Activated CD8-positive, alpha-beta T cell treated with anti-CD3 and anti-CD28 coated beads, Interleukin-2, amount 10 ng/mL, durations not matched to agents 7 days and 5 days (primary cell): ENCODE measurements at regions of chr4 and their contacts with region 1.

Region 1: GRCh38 chr4:119212234-119212963 is at the start of gene USP53:
- DNase-seq: peak; percentile 98
- ATAC-seq: peak; percentile 96
- H3K4me3 Mint-ChIP-seq: peak within 1 kb of the TSS; percentile 97
- H3K27ac Mint-ChIP-seq: peak within 1 kb of the TSS; percentile 88
- H3K4me1 Mint-ChIP-seq: peaks cover 36% of the 10 kb centered on the region
- H3K27me3 Mint-ChIP-seq: no peaks in the 10 kb centered on the region
- total RNA-seq, gene USP53: 10.0 to 10.1 TPM

Region 2: DNA sequence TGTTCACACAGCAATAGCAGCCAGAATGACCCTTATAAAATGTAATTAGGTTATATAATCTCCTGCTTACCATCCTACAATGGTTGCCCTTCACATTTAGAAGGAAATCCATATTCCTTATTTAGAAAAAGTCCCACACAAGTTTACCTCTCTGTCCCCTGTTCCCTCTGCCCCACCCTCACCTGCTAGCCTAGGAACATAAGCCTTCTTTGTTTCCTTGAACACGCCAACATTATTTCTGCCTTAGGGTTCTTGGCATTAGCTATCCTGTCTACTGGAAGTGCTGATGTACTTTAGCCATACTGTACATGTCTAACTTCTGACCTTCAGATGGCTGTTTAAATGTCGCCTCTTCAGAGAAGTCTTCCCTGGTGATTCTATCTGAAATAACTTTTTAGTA is 28.3 kb before region 1 on chr4:
- CTCF ChIA-PET with region 1: no interaction called
- POLR2A ChIA-PET with region 1: no interaction called
- DNase-seq: no peak
- ATAC-seq: no peak
- H3K4me3 Mint-ChIP-seq: no peak overlapping the region
- H3K27ac Mint-ChIP-seq: no peak overlapping the region
- H3K4me1 Mint-ChIP-seq: no peaks in the 10 kb centered on the region
- H3K27me3 Mint-ChIP-seq: no peaks in the 10 kb centered on the region

Region 3: GRCh38 chr4:119233191-119233590 is 20.8 kb after region 1 on chr4:
- CTCF ChIA-PET with region 1: interaction called, 20 read pairs
- POLR2A ChIA-PET with region 1: interaction called, 25 read pairs
- DNase-seq: no peak
- ATAC-seq: no peak
- H3K4me3 Mint-ChIP-seq: peak overlapping the region; percentile 46
- H3K27ac Mint-ChIP-seq: no peak overlapping the region
- H3K4me1 Mint-ChIP-seq: peaks cover 53% of the 10 kb centered on the region
- H3K27me3 Mint-ChIP-seq: no peaks in the 10 kb centered on the region

Region 4: DNA sequence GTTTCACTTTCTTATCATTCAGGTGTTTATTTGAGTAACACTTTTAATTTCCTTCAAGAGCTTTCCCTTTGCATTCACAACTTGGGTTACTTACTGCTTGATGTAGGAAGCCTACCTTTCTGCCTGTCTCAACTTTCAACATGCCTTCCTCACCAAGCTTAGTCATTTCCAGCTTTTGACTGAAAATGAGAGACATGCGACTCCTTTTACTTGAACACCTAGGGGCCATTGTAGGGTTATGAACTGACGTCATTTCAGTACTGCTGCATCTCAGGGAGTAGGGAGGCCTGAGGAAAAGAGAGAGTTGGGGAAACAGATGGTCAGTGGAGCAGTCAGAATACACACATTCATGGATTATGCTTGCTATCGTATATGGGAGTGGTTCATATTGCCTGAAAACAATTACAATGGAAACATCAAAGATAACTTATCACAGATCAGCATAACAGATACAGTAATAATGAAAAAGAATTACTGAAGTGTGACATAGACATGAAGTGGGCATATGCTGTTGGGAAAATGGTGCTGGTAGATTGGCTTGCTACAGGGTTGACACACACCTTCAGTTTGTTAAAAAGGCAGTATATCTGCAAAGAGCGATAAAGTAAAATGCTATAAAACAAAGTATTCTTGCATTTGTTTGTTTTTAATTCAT is 25.8 kb after region 1 on chr4:
- CTCF ChIA-PET with region 1: interaction called, 20 read pairs
- POLR2A ChIA-PET with region 1: interaction called, 25 read pairs
- DNase-seq: peak; percentile 36
- ATAC-seq: peak; percentile 76
- H3K4me3 Mint-ChIP-seq: peak overlapping the region; percentile 27
- H3K27ac Mint-ChIP-seq: peak overlapping the region; percentile 56
- H3K4me1 Mint-ChIP-seq: peaks cover 38% of the 10 kb centered on the region
- H3K27me3 Mint-ChIP-seq: no peaks in the 10 kb centered on the region

Region 5: GRCh38 chr4:119300101-119300978 is 87.9 kb after region 1 on chr4:
- CTCF ChIA-PET with region 1: interaction called, 11 read pairs
- POLR2A ChIA-PET with region 1: interaction called, 29 read pairs
- DNase-seq: peak; percentile 95
- ATAC-seq: peak; percentile 98
- H3K4me3 Mint-ChIP-seq: peak overlapping the region; percentile 99
- H3K27ac Mint-ChIP-seq: peak overlapping the region; percentile 99
- H3K4me1 Mint-ChIP-seq: peaks cover 33% of the 10 kb centered on the region
- H3K27me3 Mint-ChIP-seq: peaks cover 2% of the 10 kb centered on the region